ENCODE measurements at regions of chr3 and their contacts with region 1.

Region 1: DNA sequence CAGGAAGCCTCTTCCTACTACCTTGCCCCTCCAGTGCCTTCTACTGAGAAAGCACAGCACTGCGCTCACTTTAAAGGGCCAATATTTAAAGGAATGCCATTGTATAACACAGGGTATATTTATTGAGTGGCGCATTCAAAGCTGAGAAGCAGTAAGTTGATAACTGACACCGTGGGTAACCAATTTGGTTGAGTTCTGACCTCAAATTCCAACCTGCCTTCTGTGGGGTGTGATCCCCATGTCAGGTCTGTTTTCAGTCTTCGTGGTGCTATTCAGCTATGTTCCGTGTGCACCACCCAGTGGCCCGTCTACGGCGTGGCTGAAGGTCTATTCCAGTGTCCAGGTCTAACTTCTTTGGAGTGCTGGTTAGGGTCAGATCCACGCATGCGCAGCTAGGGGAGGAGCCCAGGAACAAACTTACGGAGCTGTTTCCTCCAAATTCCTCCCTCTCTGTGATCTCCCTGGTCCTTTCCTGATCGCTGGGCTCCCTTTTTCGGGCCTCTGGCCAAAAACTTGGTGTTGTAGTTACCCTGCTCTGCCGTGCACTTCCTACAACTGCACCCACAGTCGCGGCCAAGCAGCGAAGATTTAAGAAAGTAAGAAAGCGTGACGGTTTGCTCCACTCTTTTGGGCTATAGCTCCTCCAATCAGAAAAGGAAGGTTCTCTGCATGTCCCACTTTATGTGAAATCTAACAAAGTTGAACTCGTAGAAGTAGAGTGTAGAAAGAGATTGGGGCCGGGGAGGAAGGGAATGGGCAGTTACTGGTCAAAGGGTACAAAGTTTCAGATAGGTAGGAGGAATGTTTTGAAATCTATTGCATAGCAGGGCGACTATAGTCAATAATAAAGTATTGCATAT is 7.7 kb downstream of the LRRC2 start:
- DNase-seq: peak; percentile 84
- H3K4me3 ChIP-seq: peak overlapping the region; percentile 32 to 71 (median 34)
- H3K27ac ChIP-seq: peak overlapping the region; percentile 6
- H3K4me1 ChIP-seq: peaks cover 23% of the 10 kb centered on the region
- H3K27me3 ChIP-seq: no peaks in the 10 kb centered on the region
- CTCF ChIP-seq: peak; percentile 69 to 85
- POLR2A ChIP-seq: no peak

Region 2: DNA sequence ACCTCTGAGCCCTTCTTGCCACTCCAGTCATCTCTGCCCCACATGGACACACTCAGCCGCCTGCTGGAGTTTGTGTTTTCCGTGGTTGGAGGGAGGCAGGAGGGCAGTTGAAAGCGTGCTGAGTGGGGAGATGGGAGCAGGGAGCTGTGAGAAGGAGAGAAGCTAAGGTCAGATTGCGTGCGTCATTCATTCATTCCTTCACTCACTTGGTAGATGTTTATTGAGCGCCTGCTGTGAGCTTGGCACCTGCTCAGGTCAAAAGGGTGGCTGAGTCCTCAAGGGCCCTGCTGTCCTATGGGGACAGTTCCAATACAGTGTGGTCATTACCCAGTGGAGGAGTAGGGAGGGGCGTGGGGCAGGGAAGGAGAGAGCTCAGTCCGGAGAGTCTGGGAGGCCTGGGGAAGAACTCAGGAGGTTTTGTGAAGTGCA is 940.3 kb before region 1 on chr3:
- CTCF ChIA-PET with region 1: no interaction called
- POLR2A ChIA-PET with region 1: no interaction called
- dilution Hi-C with region 1: no loop called
- intact Hi-C with region 1: no loop called
- DNase-seq: no peak
- H3K4me3 ChIP-seq: no peak overlapping the region
- H3K27ac ChIP-seq: no peak overlapping the region
- H3K4me1 ChIP-seq: no peaks in the 10 kb centered on the region
- H3K27me3 ChIP-seq: no peaks in the 10 kb centered on the region
- CTCF ChIP-seq: no peak
- POLR2A ChIP-seq: no peak

Region 3: DNA sequence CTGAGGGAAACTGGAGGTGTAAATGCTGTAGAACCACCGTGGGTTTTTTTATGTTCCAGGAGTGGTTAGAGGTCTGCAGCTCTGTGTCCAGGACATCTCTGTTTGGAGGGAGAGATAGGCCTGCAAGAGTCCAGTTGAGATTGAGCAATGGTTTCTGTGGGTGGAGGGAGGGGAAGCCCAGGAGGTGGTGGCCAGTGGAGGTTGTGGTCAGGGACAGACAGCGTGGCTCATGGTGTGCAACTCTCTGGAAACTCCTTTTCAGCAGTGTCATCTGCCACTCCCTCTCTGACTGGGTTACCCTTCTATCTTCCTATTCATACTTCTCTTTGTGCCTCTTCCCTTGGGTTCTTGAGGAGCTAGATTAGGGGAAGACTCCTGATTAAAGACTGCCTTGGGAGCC is 540.7 kb before region 1 on chr3:
- CTCF ChIA-PET with region 1: no interaction called
- POLR2A ChIA-PET with region 1: no interaction called
- dilution Hi-C with region 1: no loop called
- intact Hi-C with region 1: no loop called
- DNase-seq: no peak
- H3K4me3 ChIP-seq: no peak overlapping the region
- H3K27ac ChIP-seq: no peak overlapping the region
- H3K4me1 ChIP-seq: no peaks in the 10 kb centered on the region
- H3K27me3 ChIP-seq: peaks cover 0 to 2% of the 10 kb centered on the region in 2 experiments
- CTCF ChIP-seq: no peak
- POLR2A ChIP-seq: no peak

Region 4: DNA sequence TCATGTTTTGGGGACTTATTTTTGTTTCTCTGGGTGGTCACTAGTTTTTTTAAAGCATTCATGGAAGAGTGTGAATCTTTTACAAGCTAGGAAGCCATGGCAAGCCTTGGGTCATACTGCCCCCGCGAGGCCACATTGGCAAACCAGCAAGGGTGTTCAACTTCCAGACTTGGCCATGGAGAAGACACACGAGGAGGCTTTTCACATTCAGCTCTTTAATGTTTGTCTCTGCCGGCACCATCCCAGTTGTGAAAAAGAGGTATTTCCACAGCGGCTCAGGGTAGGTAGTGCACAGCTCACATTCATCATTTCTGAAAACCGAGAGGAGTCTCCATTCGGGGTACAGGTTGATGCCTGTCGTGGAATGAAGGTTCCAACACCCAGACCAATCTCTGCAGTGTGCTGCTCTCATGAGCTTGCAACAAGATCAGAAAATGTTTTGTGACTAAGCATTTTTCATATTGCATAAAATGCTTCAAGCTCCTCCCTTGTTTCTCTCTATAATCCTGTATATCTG is 179.9 kb before region 1 on chr3:
- CTCF ChIA-PET with region 1: no interaction called
- POLR2A ChIA-PET with region 1: no interaction called
- dilution Hi-C with region 1: no loop called
- intact Hi-C with region 1: loop called (anchors 10 kb)
- DNase-seq: peak; percentile 56
- H3K4me3 ChIP-seq: no peak overlapping the region
- H3K27ac ChIP-seq: no peak overlapping the region
- H3K4me1 ChIP-seq: no peaks in the 10 kb centered on the region
- H3K27me3 ChIP-seq: peaks cover 8 to 13% of the 10 kb centered on the region in 2 experiments
- CTCF ChIP-seq: peak; percentile 76 to 82
- POLR2A ChIP-seq: no peak

Region 5: DNA sequence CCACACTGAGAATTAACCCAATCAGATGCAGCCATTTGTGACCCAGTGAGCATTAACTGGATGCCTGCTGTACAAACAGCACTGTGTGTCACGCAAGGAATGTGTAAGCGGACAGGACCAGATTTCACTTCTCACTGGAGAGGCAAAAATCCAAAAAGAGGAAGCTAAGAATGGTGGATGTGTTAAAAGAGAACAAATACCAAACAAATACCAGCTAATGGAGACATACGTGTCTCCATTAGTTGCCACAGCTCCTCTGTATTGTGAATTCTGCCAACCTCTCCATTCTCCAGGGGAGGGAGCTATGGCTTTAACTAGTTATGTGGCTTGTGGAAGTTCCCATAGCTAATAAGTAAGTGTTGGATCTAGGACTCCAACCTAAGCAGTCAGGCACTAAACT is 96.3 kb before region 1 on chr3:
- CTCF ChIA-PET with region 1: interaction called, 16 read pairs
- POLR2A ChIA-PET with region 1: no interaction called
- dilution Hi-C with region 1: no loop called
- intact Hi-C with region 1: no loop called
- DNase-seq: no peak
- H3K4me3 ChIP-seq: no peak overlapping the region
- H3K27ac ChIP-seq: no peak overlapping the region
- H3K4me1 ChIP-seq: no peaks in the 10 kb centered on the region
- H3K27me3 ChIP-seq: no peaks in the 10 kb centered on the region
- CTCF ChIP-seq: no peak
- POLR2A ChIP-seq: no peak

Region 6: GRCh38 chr3:46496741-46497554 is 61.5 kb before region 1 on chr3:
- CTCF ChIA-PET with region 1: interaction called, 47 read pairs
- POLR2A ChIA-PET with region 1: no interaction called
- dilution Hi-C with region 1: no loop called
- intact Hi-C with region 1: loop called (anchors 2 kb)
- DNase-seq: peak; percentile 36
- H3K4me3 ChIP-seq: no peak overlapping the region
- H3K27ac ChIP-seq: no peak overlapping the region
- H3K4me1 ChIP-seq: peaks cover 12% of the 10 kb centered on the region
- H3K27me3 ChIP-seq: no peaks in the 10 kb centered on the region
- CTCF ChIP-seq: peak; percentile 25 to 28
- POLR2A ChIP-seq: no peak

Region 7: DNA sequence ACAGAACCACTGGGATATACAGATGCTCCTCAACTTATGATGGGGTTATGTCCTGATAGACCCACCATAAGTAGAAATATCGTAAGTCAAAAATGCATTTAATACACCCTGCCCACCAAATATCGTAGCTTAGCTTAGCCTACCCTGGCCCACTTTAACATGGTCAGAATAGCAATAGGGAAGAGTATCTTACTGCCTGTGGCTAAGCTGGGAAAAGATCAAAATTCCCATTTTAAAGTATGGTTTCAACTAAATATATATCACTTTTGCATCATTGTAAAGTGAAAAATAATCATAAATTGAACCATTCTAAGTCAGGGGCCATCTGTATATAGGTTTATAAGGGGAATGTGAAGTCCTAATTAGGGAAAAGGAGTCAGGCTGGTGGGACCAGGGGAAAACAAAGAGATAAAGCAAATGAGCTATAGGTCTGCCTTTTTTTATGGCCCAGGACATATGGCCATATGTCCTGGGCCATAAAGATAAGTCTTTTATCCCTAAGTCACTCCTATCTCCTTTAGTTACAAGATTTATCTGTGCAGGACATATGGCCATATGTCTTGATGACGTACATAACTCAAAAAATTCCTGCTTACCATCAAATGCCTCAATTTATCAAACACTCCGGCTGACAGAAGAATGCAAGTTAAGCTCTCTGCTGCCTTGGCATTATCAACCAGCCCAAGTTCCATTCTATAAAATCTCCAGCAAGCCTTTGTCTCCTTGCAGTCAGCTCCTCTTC is 49.4 kb before region 1 on chr3:
- CTCF ChIA-PET with region 1: interaction called, 10 read pairs
- POLR2A ChIA-PET with region 1: no interaction called
- dilution Hi-C with region 1: no loop called
- intact Hi-C with region 1: no loop called
- DNase-seq: no peak
- H3K4me3 ChIP-seq: no peak overlapping the region
- H3K27ac ChIP-seq: no peak overlapping the region
- H3K4me1 ChIP-seq: no peaks in the 10 kb centered on the region
- H3K27me3 ChIP-seq: peaks cover 0 to 2% of the 10 kb centered on the region in 2 experiments
- CTCF ChIP-seq: no peak
- POLR2A ChIP-seq: no peak

Region 8: DNA sequence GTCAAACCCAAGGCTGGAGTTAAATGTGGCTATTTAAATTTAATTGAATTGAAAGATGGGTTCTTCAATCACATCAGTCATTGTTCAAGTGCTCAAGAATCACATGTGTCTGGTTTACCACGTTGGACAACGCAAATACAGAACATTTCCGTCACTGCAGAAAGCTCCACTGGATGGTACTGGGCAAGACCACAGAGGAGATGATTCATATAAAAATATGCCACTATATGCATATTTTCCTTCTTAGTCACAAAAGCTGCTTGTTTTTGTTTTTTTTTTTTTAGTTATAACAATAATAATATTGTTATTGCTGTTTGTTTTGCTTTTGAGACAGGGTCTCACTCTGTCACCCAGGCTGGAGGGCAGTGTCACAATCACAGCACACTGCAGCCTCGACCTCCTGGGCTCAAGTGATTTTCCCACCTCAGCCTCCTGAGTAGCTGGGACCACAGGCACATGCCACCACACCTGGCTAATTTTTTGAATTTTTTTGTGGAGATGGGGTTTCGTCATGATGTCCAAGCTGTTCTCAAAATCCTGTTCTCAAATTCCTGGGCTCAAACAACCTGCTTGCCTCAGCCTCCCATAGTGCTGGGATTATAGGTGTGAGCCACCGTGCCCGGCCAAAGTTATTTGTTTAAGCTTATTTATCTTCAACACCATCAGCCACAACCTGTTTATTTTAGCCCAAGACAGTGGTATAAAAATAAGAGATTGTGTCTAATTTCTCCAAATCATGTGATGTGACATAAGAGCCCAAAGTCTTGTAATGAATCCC is 41.2 kb before region 1 on chr3:
- CTCF ChIA-PET with region 1: interaction called, 13 read pairs
- POLR2A ChIA-PET with region 1: interaction called, 4 read pairs
- dilution Hi-C with region 1: no loop called
- intact Hi-C with region 1: loop called (anchors 1 kb)
- DNase-seq: peak; percentile 61
- H3K4me3 ChIP-seq: no peak overlapping the region
- H3K27ac ChIP-seq: peak overlapping the region; percentile 84
- H3K4me1 ChIP-seq: peaks cover 37% of the 10 kb centered on the region
- H3K27me3 ChIP-seq: no peaks in the 10 kb centered on the region
- CTCF ChIP-seq: no peak
- POLR2A ChIP-seq: no peak

Region 9: DNA sequence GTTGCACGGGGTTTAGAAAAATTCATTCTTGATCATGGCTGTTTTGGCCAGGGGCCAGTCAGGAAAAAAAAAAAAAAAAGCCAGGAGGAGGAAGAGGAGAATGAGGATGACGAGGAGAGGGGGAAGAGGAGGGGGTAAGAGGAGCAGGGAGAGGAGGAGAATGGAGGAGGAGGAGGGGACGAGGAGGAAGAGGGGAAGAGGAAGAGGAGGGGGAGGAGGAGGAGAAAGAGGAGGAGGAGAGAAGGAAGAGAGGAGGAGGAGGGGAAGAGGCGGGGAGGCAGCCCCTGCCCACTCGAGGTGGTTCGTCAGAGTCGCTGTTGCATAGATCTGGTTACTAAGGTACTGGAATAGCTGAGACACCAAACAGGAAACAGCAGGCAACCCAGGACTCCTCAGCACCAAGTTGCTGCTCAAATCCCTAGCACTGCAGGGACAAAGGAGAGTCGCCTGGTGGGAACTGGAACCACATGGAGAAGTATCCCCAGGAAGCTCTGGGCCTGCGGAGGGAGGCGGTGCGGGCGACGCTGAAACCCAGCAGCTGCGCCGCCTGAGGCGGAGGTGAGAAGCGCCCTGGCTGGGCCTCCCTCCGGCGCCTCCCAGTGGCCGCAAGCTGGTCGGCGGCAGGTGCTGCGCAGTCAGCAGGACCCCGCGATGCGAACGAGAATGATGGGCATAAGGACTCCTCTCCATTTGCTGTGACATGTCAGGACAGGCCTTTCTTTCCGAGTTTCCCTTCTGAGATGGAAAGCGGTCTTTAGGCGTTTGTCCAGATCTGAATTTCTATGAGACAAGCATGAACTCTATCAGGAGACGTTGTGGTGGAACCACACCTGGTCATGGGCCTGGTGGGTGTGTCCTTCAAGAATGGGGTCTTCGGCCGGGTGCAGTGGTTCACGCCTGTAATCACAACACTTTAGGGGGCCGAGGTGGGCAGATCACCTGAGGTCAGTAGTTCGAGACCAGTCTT is 71.4 kb after region 1 on chr3:
- CTCF ChIA-PET with region 1: interaction called, 30 read pairs
- POLR2A ChIA-PET with region 1: no interaction called
- dilution Hi-C with region 1: no loop called
- intact Hi-C with region 1: loop called (anchors 1 kb)
- DNase-seq: peak; percentile 86
- H3K4me3 ChIP-seq: peak overlapping the region; percentile 15 to 47 (median 16)
- H3K27ac ChIP-seq: no peak overlapping the region
- H3K4me1 ChIP-seq: peaks cover 9% of the 10 kb centered on the region
- H3K27me3 ChIP-seq: peaks cover 4 to 6% of the 10 kb centered on the region in 2 experiments
- CTCF ChIP-seq: peak; percentile 99 to 100
- POLR2A ChIP-seq: peak; percentile 54

Measured in endothelial cell of umbilical vein (primary cell).